ENCODE measurements at regions of chr16 and their contacts with region 1.

Region 1: GRCh38 chr16:75305364-75306098 is 54.1 kb upstream of the BCAR1 start:
- DNase-seq: peak in 3 of 10 donors; percentile 16 to 61 (median 50)
- H3K4me3 ChIP-seq: peak overlapping the region in 15 of 59 donors; percentile 0 to 31 (median 7)
- H3K27ac ChIP-seq: peak overlapping the region in 58 of 59 donors; percentile 7 to 96 (median 86)
- H3K27me3 ChIP-seq: no peaks in the 10 kb centered on the region
- CTCF ChIP-seq: no peak

Region 2: DNA sequence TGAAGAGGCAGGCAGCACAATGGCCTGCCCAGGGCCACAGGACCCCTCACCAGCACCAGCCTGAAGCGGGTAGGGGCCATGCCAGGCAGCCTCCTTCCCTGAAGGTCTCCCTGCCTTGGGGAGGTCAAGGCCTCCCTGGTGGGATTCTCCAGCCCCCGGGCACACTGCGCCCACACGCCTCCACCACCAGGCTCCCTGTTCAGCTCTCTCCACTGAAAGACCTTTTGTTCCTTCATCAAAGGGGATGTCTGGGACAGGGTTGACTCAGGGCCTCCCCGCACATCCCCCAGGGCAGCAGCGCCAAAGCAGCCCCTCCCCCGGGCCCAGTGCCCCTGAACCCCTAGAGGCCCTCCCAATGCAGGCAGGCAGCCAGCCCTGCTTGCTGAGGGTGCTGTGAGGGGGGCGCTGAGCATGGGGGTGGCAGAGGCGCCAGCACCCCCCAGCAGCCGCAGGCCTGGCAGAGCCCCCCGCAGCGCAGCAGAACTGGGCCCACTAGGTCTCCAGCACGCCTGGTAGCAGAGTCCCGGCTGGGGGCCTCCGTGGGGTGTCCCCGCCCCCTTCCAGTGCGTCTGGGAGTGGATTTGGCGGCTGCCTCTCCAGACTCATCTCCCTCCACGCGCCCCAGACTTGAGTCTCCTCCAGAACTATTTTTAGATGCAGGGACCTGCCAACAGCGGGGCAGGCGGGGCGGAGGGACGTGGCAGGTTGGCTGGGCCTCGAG is 67.2 kb before region 1 on chr16:
- intact Hi-C with region 1: no loop called
- DNase-seq: peak; percentile 72 to 91 (median 87)
- H3K4me3 ChIP-seq: peak overlapping the region in 33 of 59 donors; percentile 0 to 49 (median 21)
- H3K27ac ChIP-seq: peak overlapping the region; percentile 92 to 100 (median 98)
- H3K27me3 ChIP-seq: no peaks in the 10 kb centered on the region
- CTCF ChIP-seq: peak in 16 of 56 donors; percentile 2 to 46 (median 18)

Region 3: GRCh38 chr16:75265845-75266701 is 39.5 kb before region 1 on chr16:
- intact Hi-C with region 1: loop called (anchors 5 kb)
- DNase-seq: peak; percentile 55 to 86 (median 72)
- H3K4me3 ChIP-seq: peak overlapping the region; percentile 62 to 99 (median 94)
- H3K27ac ChIP-seq: peak overlapping the region; percentile 63 to 98 (median 94)
- H3K27me3 ChIP-seq: no peaks in the 10 kb centered on the region
- CTCF ChIP-seq: peak in 6 of 56 donors; percentile 6 to 14 (median 12)

Region 4: DNA sequence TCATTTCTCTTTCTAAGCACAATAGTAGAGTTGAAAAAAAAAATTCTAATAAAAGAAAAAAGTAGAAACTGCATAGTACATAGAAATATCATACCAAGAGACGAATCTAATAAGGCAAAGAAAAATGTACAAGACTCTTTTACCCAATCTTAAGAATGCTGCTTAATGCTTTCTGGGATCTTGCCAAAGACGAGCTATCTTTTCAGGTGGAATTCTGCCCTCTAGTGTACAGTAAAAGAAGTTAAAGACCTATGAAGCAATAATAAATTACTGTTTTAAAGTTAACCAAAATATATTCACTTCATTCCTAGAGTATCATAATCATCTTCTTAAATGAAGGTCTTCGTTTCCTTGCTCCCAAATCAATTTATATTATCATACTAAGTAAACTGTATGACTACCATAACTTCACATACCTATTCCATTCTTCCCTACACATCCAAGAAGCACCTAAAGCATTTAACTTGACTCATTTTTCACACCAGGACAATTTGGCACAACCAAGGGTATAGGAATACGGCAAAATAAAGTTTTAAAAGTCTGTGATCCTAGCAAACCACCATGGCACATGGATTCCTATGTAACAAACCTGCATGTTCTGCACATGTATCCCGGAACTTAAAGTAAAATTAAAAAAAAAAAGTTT is 80.1 kb after region 1 on chr16:
- intact Hi-C with region 1: no loop called
- DNase-seq: no peak
- H3K4me3 ChIP-seq: no peak overlapping the region
- H3K27ac ChIP-seq: peak overlapping the region in 4 of 59 donors; percentile 10 to 48 (median 12)
- H3K27me3 ChIP-seq: no peaks in the 10 kb centered on the region
- CTCF ChIP-seq: peak; percentile 70 to 95 (median 85)

Region 5: GRCh38 chr16:75495076-75495674 is 189.6 kb after region 1 on chr16 and contains the start of gene CHST6:
- intact Hi-C with region 1: no loop called
- DNase-seq: peak; percentile 52 to 84 (median 66)
- H3K4me3 ChIP-seq: peak within 1 kb of the TSS; percentile 42 to 80 (median 65)
- H3K27ac ChIP-seq: peak within 1 kb of the TSS in 58 of 59 donors; percentile 5 to 90 (median 80)
- H3K27me3 ChIP-seq: peaks cover 0 to 5% (median 0%) of the 10 kb centered on the region in 45 donors
- CTCF ChIP-seq: peak in 2 of 56 donors; percentile 12 to 29
- total RNA-seq, gene CHST6: 4.8 to 43.3 (median 16.5) TPM